Activated CD4-positive, alpha-beta T cell treated with anti-CD3 and anti-CD28 coated beads for 36 hours (primary cell): ENCODE measurements at regions of chr1 and their contacts with region 1.

Region 1: GRCh38 chr1:52702886-52703787 is 5.0 kb upstream of the COA7 start:
- DNase-seq: peak; percentile 89
- ATAC-seq: peak; percentile 94
- H3K4me3 Mint-ChIP-seq: peak overlapping the region; percentile 79
- H3K27ac Mint-ChIP-seq: peak overlapping the region; percentile 93
- H3K4me1 Mint-ChIP-seq: peaks cover 16% of the 10 kb centered on the region
- H3K27me3 Mint-ChIP-seq: no peaks in the 10 kb centered on the region

Region 2: GRCh38 chr1:52111492-52111891 is 591.6 kb before region 1 on chr1:
- CTCF ChIA-PET with region 1: no interaction called
- POLR2A ChIA-PET with region 1: no interaction called
- intact Hi-C with region 1: no loop called
- DNase-seq: no peak
- ATAC-seq: no peak
- H3K4me3 Mint-ChIP-seq: no peak overlapping the region
- H3K27ac Mint-ChIP-seq: no peak overlapping the region
- H3K4me1 Mint-ChIP-seq: no peaks in the 10 kb centered on the region
- H3K27me3 Mint-ChIP-seq: no peaks in the 10 kb centered on the region

Region 3: GRCh38 chr1:52726265-52727113 is 23.4 kb after region 1 on chr1 and contains the start of gene ZYG11B:
- CTCF ChIA-PET with region 1: no interaction called
- POLR2A ChIA-PET with region 1: no interaction called
- intact Hi-C with region 1: loop called (anchors 1 kb)
- DNase-seq: peak; percentile 96
- ATAC-seq: peak; percentile 91
- H3K4me3 Mint-ChIP-seq: peak within 1 kb of the TSS; percentile 93
- H3K27ac Mint-ChIP-seq: peak within 1 kb of the TSS; percentile 85
- H3K4me1 Mint-ChIP-seq: peaks cover 32% of the 10 kb centered on the region
- H3K27me3 Mint-ChIP-seq: no peaks in the 10 kb centered on the region
- total RNA-seq, gene ZYG11B: 12.9 to 14.3 TPM

Region 4: GRCh38 chr1:52825868-52826267 is 122.7 kb after region 1 on chr1:
- CTCF ChIA-PET with region 1: no interaction called
- POLR2A ChIA-PET with region 1: no interaction called
- intact Hi-C with region 1: loop called (anchors 1 to 10 kb)
- DNase-seq: no peak
- ATAC-seq: peak; percentile 36
- H3K4me3 Mint-ChIP-seq: no peak overlapping the region
- H3K27ac Mint-ChIP-seq: no peak overlapping the region
- H3K4me1 Mint-ChIP-seq: no peaks in the 10 kb centered on the region
- H3K27me3 Mint-ChIP-seq: no peaks in the 10 kb centered on the region

Region 5: DNA sequence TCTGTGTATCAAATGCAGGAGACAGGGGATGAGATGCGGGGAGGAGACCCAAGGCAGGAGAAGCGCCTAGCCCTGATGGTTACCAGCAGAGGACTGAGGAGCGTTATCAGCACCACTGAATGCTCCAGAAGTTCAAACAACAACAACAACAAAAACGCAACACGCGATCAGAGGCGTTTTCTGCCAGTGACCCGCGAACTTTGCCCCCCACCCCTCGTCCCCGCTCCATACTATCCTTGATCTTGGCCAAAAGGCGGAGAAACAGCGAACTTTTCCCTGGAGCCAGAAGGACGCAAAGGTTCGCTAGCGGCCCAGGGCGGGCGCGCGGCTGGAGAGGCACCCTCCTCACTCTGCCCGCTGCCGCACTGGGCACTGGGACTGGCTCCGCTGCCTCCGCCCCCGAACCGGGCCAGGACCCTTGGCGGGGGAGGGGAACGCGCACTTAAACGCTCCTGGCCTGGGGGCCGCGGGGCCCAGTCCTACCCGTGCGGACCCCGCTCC is 217.7 kb after region 1 on chr1:
- CTCF ChIA-PET with region 1: interaction called, 3 read pairs
- POLR2A ChIA-PET with region 1: no interaction called
- intact Hi-C with region 1: loop called in 1 of 2 experiments (anchors 1 kb)
- DNase-seq: no peak
- ATAC-seq: no peak
- H3K4me3 Mint-ChIP-seq: peak overlapping the region; percentile 84
- H3K27ac Mint-ChIP-seq: no peak overlapping the region
- H3K4me1 Mint-ChIP-seq: peaks cover 27% of the 10 kb centered on the region
- H3K27me3 Mint-ChIP-seq: no peaks in the 10 kb centered on the region

Region 6: GRCh38 chr1:53182111-53182593 is 479.0 kb after region 1 on chr1:
- CTCF ChIA-PET with region 1: no interaction called
- POLR2A ChIA-PET with region 1: no interaction called
- intact Hi-C with region 1: loop called in 1 of 2 experiments (anchors 1 kb)
- DNase-seq: peak; percentile 93
- ATAC-seq: peak; percentile 95
- H3K4me3 Mint-ChIP-seq: no peak overlapping the region
- H3K27ac Mint-ChIP-seq: no peak overlapping the region
- H3K4me1 Mint-ChIP-seq: no peaks in the 10 kb centered on the region
- H3K27me3 Mint-ChIP-seq: peaks cover 3% of the 10 kb centered on the region

Region 7: DNA sequence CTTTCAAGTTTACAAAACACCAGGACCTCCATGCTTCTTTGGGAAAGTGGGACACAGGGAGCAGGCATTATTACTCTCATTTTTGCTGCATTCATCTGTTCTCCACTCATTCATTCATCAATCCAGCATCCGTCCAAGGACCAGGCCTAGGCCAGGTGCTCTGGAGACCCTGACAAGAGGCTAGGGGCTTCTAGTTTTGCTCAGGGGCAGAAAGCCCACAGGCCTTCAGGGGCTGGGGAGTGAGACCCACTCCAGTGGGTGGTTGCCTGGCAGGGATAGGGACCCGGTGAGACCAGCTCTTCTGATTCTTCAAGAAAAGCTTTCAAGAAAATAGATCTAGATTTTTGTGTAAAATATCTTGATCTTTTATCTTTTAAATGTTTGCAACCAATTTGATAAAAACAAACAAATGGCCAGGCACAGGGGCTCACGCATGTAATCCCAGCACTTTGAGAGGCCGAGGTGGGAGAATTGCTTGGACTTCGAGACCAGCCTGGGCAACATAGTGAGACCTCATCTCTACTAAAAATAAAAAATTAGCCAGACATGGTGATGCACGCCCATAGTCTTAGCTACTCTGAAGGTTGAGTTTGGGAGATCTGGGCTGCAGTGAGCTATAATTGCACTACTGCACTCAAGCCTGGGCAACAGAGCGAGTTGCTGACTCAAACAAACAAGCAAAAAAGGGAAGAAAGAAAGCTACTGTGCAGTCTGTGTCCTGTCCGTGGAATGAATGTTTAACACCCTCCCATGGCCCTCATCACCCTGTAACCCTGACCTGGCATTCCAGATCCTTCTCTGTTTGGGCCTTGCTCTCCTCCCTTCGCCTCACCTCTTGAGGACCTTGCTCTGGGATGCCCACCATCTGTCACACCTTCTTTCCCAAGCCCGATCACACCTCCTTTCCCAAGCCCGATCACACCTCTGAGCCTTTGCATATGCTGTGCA is 642.0 kb after region 1 on chr1:
- CTCF ChIA-PET with region 1: no interaction called
- POLR2A ChIA-PET with region 1: no interaction called
- intact Hi-C with region 1: no loop called
- DNase-seq: no peak
- ATAC-seq: no peak
- H3K4me3 Mint-ChIP-seq: no peak overlapping the region
- H3K27ac Mint-ChIP-seq: no peak overlapping the region
- H3K4me1 Mint-ChIP-seq: peaks cover 13% of the 10 kb centered on the region
- H3K27me3 Mint-ChIP-seq: no peaks in the 10 kb centered on the region